Naive thymus-derived CD4-positive, alpha-beta T cell (primary cell): ENCODE measurements at regions of chr6 and their contacts with region 1.

Region 1: DNA sequence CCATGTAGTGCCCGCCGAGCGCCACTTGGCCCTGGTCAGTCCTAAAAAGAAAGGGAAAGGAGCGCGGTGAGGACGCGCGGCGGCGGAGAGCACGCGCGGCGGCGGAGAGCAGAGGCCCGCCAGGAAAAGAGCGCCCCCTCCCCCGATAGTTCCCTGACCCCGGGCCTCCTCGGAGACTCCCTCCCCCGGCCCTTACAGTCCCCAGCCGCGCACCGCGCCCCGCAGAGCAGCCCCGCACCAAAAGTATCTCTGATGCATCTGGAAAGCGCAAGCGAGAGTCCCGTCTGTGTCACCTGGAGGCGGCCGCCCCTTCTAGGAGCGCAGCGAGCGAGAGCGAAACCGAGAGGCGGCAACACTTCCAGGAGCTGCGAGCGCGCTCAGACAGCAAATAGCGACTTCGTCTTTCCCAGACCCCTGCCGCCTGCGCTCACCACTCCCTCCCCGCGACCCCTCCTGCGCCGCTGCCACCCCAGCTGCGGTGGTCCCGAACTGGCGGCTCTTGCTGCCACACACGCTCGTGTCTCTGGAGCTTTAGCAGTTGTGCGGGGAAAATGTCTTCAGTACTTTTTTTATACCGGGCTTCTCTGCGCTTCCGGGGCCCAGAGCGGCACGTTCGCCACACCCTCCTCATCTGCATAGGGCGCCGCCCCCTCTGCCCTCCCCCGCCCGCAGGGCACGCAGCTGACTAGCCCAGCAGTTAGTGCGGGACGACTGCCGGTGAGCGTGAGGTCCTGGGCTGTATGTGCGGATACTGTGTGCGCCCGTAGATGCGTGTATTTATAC is at the start of gene TENT5A:
- DNase-seq: peak; percentile 75 to 91 (median 90)
- ATAC-seq: peak; percentile 82
- H3K4me3 ChIP-seq: peak within 1 kb of the TSS; percentile 71
- H3K4me3 Mint-ChIP-seq: peak within 1 kb of the TSS; percentile 87 to 99 (median 98)
- H3K27ac ChIP-seq: peak within 1 kb of the TSS; percentile 74
- H3K27ac Mint-ChIP-seq: peak within 1 kb of the TSS; percentile 83 to 99 (median 96)
- H3K4me1 ChIP-seq: peaks cover 4 to 8% of the 10 kb centered on the region in 2 donors
- H3K4me1 Mint-ChIP-seq: peaks cover 23 to 42% (median 38%) of the 10 kb centered on the region in 7 donors
- H3K27me3 ChIP-seq: no peaks in the 10 kb centered on the region
- H3K27me3 Mint-ChIP-seq: peaks cover 0 to 67% (median 0%) of the 10 kb centered on the region in 5 donors
- total RNA-seq, gene TENT5A: 0.80 to 12.5 (median 7.4) TPM

Region 2: GRCh38 chr6:79777713-79778579 is 1974.4 kb before region 1 on chr6:
- CTCF ChIA-PET with region 1: no interaction called
- POLR2A ChIA-PET with region 1: no interaction called
- intact Hi-C with region 1: loop called in 1 of 2 experiments (anchors 1 kb)
- DNase-seq: peak; percentile 68 to 94 (median 79)
- ATAC-seq: peak; percentile 96
- H3K4me3 ChIP-seq: peak overlapping the region; percentile 60
- H3K4me3 Mint-ChIP-seq: peak overlapping the region; percentile 68 to 83 (median 80)
- H3K27ac ChIP-seq: no peak overlapping the region
- H3K27ac Mint-ChIP-seq: peak overlapping the region in 6 of 9 donors; percentile 0 to 80 (median 44)
- H3K4me1 ChIP-seq: peaks cover 0 to 6% of the 10 kb centered on the region in 2 donors
- H3K4me1 Mint-ChIP-seq: peaks cover 7 to 9% (median 7%) of the 10 kb centered on the region in 7 donors
- H3K27me3 ChIP-seq: no peaks in the 10 kb centered on the region
- H3K27me3 Mint-ChIP-seq: peaks cover 0 to 4% (median 0%) of the 10 kb centered on the region in 5 donors

Region 3: GRCh38 chr6:80004173-80005072 is 1747.9 kb before region 1 on chr6 and contains the start of gene TTK:
- CTCF ChIA-PET with region 1: interaction called, 11 read pairs
- POLR2A ChIA-PET with region 1: interaction called, 7 read pairs
- intact Hi-C with region 1: loop called (anchors 1 kb)
- DNase-seq: peak; percentile 84 to 94 (median 91)
- ATAC-seq: peak; percentile 100
- H3K4me3 ChIP-seq: peak within 1 kb of the TSS; percentile 94
- H3K4me3 Mint-ChIP-seq: peak within 1 kb of the TSS; percentile 80 to 97 (median 90)
- H3K27ac ChIP-seq: peak within 1 kb of the TSS; percentile 80
- H3K27ac Mint-ChIP-seq: peak within 1 kb of the TSS; percentile 65 to 97 (median 94)
- H3K4me1 ChIP-seq: peaks cover 9 to 10% of the 10 kb centered on the region in 2 donors
- H3K4me1 Mint-ChIP-seq: peaks cover 2 to 41% (median 19%) of the 10 kb centered on the region in 7 donors
- H3K27me3 ChIP-seq: no peaks in the 10 kb centered on the region
- H3K27me3 Mint-ChIP-seq: peaks cover 0 to 5% (median 0%) of the 10 kb centered on the region in 5 donors
- total RNA-seq, gene TTK: 0.13 to 22.4 (median 0.81) TPM

Region 4: DNA sequence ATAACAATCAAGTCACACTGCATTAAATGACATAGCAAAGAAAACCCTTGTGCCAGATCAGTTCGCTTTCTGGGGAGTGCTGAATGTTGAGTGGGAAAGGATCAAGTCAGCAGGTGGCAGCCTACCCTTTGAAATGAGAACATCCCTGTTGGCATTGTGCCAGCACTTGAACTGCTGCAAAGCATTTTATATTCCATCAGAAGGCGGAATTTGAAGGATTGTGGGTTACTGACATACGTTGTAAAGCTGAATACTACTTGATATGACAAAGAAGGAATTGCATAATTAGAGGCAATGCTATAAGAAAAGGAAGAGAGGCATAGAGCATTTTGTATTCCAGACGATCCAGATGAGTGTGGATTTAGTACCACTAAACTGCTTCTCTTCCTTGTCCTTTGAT is 1619.3 kb before region 1 on chr6:
- CTCF ChIA-PET with region 1: no interaction called
- POLR2A ChIA-PET with region 1: no interaction called
- intact Hi-C with region 1: loop called (anchors 1 to 10 kb)
- DNase-seq: peak in 6 of 9 donors; percentile 9 to 30 (median 17)
- ATAC-seq: no peak
- H3K4me3 ChIP-seq: no peak overlapping the region
- H3K4me3 Mint-ChIP-seq: no peak overlapping the region
- H3K27ac ChIP-seq: no peak overlapping the region
- H3K27ac Mint-ChIP-seq: no peak overlapping the region
- H3K4me1 ChIP-seq: no peaks in the 10 kb centered on the region
- H3K4me1 Mint-ChIP-seq: peaks cover 0 to 3% (median 0%) of the 10 kb centered on the region in 7 donors
- H3K27me3 ChIP-seq: no peaks in the 10 kb centered on the region
- H3K27me3 Mint-ChIP-seq: no peaks in the 10 kb centered on the region

Region 5: DNA sequence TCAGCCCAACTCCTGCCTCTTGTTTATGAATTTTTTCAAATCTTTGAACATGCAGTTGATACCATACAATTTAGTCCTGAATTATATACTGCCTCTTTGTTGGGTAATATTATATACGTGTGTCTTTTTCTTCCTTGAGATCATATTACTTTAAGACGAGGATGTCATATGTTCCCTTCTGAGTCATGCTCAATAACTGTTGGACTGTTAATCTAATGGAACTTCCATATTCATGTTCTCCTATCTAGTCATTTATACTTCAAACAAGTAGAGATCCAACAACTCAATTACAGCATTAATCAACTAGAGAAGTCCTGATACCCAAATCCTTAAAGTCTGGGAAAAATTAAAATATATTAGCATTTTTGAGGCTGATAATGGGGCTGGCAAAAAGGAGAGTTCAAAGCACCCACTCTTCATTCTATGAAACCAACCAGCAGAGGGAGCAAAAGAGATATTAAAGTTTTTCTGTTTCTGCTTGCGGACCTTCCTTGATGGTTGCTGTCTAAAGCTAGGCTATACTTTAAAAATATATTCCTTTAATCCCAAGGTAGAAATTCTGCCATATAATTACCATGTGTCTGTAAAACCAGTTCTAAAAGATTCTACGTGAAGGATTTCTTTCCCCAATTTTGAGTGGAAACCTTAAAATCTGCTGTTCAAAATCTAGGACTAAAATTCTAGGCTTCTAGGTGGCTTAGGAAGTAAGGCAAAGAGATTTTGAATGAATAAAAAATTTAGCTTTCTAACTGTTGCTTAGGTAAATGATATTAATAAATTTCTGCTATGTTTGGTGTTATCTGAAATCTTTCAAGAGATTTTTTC is 1147.0 kb before region 1 on chr6:
- CTCF ChIA-PET with region 1: interaction called, 20 read pairs
- POLR2A ChIA-PET with region 1: interaction called, 7 read pairs
- intact Hi-C with region 1: no loop called
- DNase-seq: peak in 5 of 9 donors; percentile 3 to 25 (median 13)
- ATAC-seq: no peak
- H3K4me3 ChIP-seq: no peak overlapping the region
- H3K4me3 Mint-ChIP-seq: no peak overlapping the region
- H3K27ac ChIP-seq: no peak overlapping the region
- H3K27ac Mint-ChIP-seq: no peak overlapping the region
- H3K4me1 ChIP-seq: no peaks in the 10 kb centered on the region
- H3K4me1 Mint-ChIP-seq: no peaks in the 10 kb centered on the region
- H3K27me3 ChIP-seq: no peaks in the 10 kb centered on the region
- H3K27me3 Mint-ChIP-seq: peaks cover 4 to 35% (median 18%) of the 10 kb centered on the region in 5 donors

Region 6: GRCh38 chr6:81683928-81684327 is 68.4 kb before region 1 on chr6:
- CTCF ChIA-PET with region 1: no interaction called
- POLR2A ChIA-PET with region 1: no interaction called
- intact Hi-C with region 1: no loop called
- DNase-seq: no peak
- ATAC-seq: no peak
- H3K4me3 ChIP-seq: no peak overlapping the region
- H3K4me3 Mint-ChIP-seq: no peak overlapping the region
- H3K27ac ChIP-seq: no peak overlapping the region
- H3K27ac Mint-ChIP-seq: no peak overlapping the region
- H3K4me1 ChIP-seq: no peaks in the 10 kb centered on the region
- H3K4me1 Mint-ChIP-seq: peaks cover 0 to 2% (median 0%) of the 10 kb centered on the region in 7 donors
- H3K27me3 ChIP-seq: no peaks in the 10 kb centered on the region
- H3K27me3 Mint-ChIP-seq: peaks cover 0 to 4% (median 0%) of the 10 kb centered on the region in 5 donors

Region 7: GRCh38 chr6:82247634-82248232 is 495.4 kb after region 1 on chr6 and contains the start of gene IBTK:
- CTCF ChIA-PET with region 1: no interaction called
- POLR2A ChIA-PET with region 1: no interaction called
- intact Hi-C with region 1: loop called (anchors 1 kb)
- DNase-seq: peak; percentile 86 to 97 (median 92)
- ATAC-seq: peak; percentile 97
- H3K4me3 ChIP-seq: peak within 1 kb of the TSS; percentile 87
- H3K4me3 Mint-ChIP-seq: peak within 1 kb of the TSS; percentile 92 to 99 (median 98)
- H3K27ac ChIP-seq: peak within 1 kb of the TSS; percentile 85
- H3K27ac Mint-ChIP-seq: peak within 1 kb of the TSS; percentile 93 to 99 (median 97)
- H3K4me1 ChIP-seq: peaks cover 12 to 15% of the 10 kb centered on the region in 2 donors
- H3K4me1 Mint-ChIP-seq: peaks cover 20 to 51% (median 42%) of the 10 kb centered on the region in 7 donors
- H3K27me3 ChIP-seq: no peaks in the 10 kb centered on the region
- H3K27me3 Mint-ChIP-seq: no peaks in the 10 kb centered on the region
- total RNA-seq, gene IBTK: 16.6 to 35.8 (median 26.1) TPM